ENCODE measurements at regions of chr10 and their contacts with region 1.

Region 1: DNA sequence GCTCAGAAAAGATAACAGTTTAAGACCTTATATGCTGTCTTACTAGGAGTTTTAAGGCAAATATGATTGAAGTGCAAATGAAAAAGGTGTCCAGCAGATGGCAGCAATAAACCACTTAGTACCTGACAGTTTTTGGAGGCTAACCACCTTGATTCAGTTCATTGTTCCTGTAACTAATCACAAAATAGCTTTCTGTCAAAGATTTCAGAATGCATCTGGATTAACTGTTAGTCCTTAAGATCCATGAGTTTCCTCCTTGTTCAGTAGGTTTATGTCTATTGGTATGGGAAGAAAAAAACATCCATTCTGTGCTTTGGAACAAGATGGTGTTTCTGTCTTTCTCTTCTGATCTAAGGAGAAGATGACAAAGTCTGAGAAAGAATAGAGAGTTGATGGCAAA is 46.6 kb downstream of the CCSER2 start:
- DNase-seq: peak; percentile 27 to 61
- H3K4me3 ChIP-seq: no peak overlapping the region
- H3K27ac ChIP-seq: no peak overlapping the region
- H3K4me1 ChIP-seq: peaks cover 10% of the 10 kb centered on the region
- H3K27me3 ChIP-seq: no peaks in the 10 kb centered on the region
- CTCF ChIP-seq: peak; percentile 87

Region 2: DNA sequence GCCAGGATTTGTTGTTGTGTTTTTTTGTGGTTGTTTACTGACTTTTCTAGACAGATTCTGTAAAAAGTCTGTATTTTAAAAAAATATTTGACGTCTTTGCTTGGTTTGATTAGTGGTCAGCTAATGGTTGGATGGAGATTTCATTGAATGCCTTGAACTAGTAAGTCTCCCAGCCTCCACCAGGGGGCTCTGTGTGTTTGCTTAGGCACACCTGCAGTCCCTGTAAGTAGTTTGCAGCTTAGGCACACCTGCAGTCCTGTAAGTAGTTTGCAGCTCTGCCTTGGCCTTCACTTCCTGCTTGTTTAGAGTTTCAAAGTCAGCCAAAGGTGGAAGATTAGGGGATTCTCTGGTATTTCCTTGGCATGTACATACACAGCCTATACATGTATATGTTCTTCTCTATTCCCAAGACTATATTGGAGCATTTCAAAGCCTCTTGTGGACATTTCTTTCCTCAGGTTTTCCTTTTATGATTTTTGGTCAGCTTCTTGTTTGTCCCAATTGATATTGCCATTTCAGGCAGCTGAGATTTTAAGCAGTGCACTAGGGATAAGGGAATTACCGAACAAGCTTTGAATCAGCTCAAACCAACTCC is 55.0 kb after region 1 on chr10:
- CTCF ChIA-PET with region 1: interaction called, 3 read pairs
- POLR2A ChIA-PET with region 1: no interaction called
- intact Hi-C with region 1: loop called (anchors 1 kb)
- DNase-seq: peak; percentile 67 to 74
- H3K4me3 ChIP-seq: no peak overlapping the region
- H3K27ac ChIP-seq: no peak overlapping the region
- H3K4me1 ChIP-seq: peaks cover 7% of the 10 kb centered on the region
- H3K27me3 ChIP-seq: no peaks in the 10 kb centered on the region
- CTCF ChIP-seq: peak; percentile 96

Measured in PC-9 (cell line).